AG04449 (cell line): ENCODE measurements at regions of chr2 and their contacts with region 1.

Region 1: GRCh38 chr2:187581125-187581896 is 27.1 kb upstream of the TFPI start:
- DNase-seq: no peak
- H3K4me3 ChIP-seq: no peak overlapping the region
- CTCF ChIP-seq: peak; percentile 50

Region 2: GRCh38 chr2:187519419-187520120 is 61.7 kb before region 1 on chr2:
- CTCF ChIA-PET with region 1: interaction called, 29 read pairs
- POLR2A ChIA-PET with region 1: no interaction called
- DNase-seq: no peak
- H3K4me3 ChIP-seq: no peak overlapping the region
- CTCF ChIP-seq: no peak

Region 3: DNA sequence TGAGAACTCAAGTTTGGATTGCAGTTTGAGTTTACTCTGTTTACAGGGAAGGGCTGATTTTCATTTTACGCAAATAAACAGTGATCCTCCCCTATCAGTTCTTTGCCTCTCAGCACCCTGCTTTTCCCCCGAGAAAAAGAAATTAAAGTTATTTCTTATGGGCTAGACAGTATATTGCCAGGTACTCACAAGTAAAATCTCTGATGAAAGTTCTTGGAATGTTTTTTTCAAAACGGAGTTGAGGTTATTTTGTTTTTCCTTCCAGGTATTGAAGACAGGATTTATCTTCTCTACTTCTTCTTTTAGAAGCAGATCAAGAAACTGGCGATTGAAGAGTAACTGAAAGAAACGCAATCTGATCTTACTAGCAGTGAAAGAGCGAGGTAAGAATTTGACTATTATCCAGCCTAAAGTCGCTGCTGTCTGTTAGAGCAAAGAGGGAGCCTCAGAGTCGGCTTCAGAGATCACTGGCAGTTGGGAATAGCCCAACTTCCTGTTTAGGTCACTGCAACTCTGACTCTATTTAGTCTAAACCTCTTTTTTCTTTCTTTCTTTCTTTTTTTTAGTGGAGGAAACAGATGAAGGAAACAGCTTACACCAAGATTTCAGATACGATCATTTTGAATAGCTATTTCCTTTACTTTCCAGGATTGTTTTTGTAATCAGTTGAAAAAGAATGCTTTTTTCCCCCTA is 27.2 kb before region 1 on chr2 and contains the start of gene TFPI:
- CTCF ChIA-PET with region 1: interaction called, 44 read pairs
- POLR2A ChIA-PET with region 1: no interaction called
- DNase-seq: no peak
- H3K4me3 ChIP-seq: peak within 1 kb of the TSS; percentile 58
- CTCF ChIP-seq: no peak

Region 4: DNA sequence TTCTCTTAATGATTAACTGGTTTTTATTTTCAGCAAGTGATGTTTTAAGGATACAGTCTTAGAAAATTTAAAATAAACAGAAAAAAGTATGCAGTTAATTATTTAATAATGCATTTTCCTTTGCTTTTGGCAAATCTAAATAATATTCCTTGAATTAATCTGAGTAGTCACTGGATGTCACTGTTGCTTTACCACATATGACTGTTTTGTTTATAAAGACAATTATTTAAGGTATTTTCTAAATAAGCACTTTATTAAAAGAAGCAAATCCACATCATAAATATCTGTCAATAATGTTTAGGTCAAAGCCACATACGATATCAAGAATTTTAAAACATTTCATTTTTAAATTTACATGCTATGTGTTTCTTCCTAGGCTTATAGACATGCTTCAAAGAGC is 13.5 kb after region 1 on chr2:
- CTCF ChIA-PET with region 1: interaction called, 19 read pairs
- POLR2A ChIA-PET with region 1: no interaction called
- DNase-seq: no peak
- H3K4me3 ChIP-seq: no peak overlapping the region
- CTCF ChIP-seq: no peak

Region 5: GRCh38 chr2:187842978-187843847 is 261.9 kb after region 1 on chr2:
- CTCF ChIA-PET with region 1: interaction called, 147 read pairs
- POLR2A ChIA-PET with region 1: no interaction called
- DNase-seq: peak; percentile 52
- H3K4me3 ChIP-seq: no peak overlapping the region
- CTCF ChIP-seq: peak; percentile 35

Region 6: GRCh38 chr2:189412330-189412953 is 1831.1 kb after region 1 on chr2:
- CTCF ChIA-PET with region 1: interaction called, 13 read pairs
- POLR2A ChIA-PET with region 1: no interaction called
- DNase-seq: no peak
- H3K4me3 ChIP-seq: no peak overlapping the region
- CTCF ChIP-seq: peak; percentile 43